ENCODE measurements at regions of chr11 and their contacts with region 1.

Region 1: GRCh38 chr11:119067371-119068222 is at the start of gene VPS11:
- DNase-seq: peak; percentile 99
- ATAC-seq: peak; percentile 99
- H3K4me3 Mint-ChIP-seq: peak within 1 kb of the TSS; percentile 89
- H3K27ac Mint-ChIP-seq: peak within 1 kb of the TSS; percentile 97
- H3K4me1 Mint-ChIP-seq: peaks cover 44% of the 10 kb centered on the region
- H3K27me3 Mint-ChIP-seq: no peaks in the 10 kb centered on the region
- total RNA-seq, gene VPS11: 30.8 to 31.6 TPM

Region 2: DNA sequence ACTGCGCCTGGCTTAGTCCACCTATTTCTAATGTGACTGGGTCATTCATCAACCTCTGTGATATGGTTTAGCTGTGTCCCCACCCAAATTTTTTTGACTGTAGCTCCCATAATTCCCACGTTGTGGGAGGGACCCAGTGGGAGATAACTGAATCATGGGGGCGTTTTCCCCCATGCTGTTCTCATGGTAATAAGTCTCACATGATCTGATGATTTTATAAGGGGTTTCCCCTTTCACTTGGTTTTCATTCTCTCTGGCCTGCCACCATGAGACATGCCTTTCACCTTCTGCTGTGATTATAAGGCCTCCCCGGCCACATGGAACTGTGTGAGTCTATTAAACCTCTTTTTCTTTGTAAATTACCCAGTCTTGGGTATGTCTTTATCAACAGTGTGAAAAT is 60.9 kb before region 1 on chr11:
- CTCF ChIA-PET with region 1: no interaction called
- POLR2A ChIA-PET with region 1: no interaction called
- DNase-seq: no peak
- ATAC-seq: no peak
- H3K4me3 Mint-ChIP-seq: no peak overlapping the region
- H3K27ac Mint-ChIP-seq: no peak overlapping the region
- H3K4me1 Mint-ChIP-seq: peaks cover 3% of the 10 kb centered on the region
- H3K27me3 Mint-ChIP-seq: no peaks in the 10 kb centered on the region

Region 3: DNA sequence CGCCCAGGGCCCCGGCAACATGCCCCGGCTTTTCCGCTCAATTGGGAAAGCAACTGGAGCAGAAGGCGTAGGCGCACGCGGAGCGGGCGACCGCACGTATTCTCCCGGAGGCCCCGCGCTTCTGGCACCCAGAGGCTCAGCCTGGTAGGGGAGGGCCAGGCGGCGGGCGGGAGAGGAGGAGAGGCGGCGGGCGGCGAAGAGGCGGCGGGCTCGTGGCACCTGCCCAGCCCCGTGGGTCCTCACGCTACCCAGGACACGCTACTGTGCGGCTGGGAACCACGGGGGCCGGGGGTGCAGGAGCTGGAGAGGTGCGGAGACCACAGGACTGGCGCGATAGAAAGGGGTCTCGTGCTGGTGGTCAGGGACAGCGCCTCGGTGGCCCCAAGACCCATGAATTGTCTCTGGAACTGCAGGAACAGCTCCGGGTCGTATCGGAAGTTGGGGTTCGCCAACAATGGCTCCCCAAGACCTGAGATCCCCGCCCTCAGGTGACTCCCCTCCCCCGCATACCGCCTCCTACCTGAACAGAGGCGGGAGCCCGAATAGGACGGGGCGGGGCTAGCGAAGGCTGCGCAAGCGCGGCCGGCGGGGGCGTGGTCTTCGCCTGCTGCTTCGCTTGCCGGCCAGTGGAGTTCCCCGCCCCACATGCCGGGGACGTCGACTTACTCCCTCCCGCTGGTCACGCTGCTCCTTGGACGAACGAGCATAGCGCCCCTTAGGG is 37.1 kb before region 1 on chr11 and contains the start of gene SLC37A4:
- CTCF ChIA-PET with region 1: interaction called, 12 read pairs
- POLR2A ChIA-PET with region 1: interaction called, 4 read pairs
- DNase-seq: peak; percentile 99
- ATAC-seq: peak; percentile 95
- H3K4me3 Mint-ChIP-seq: peak within 1 kb of the TSS; percentile 65
- H3K27ac Mint-ChIP-seq: peak within 1 kb of the TSS; percentile 88
- H3K4me1 Mint-ChIP-seq: peaks cover 19% of the 10 kb centered on the region
- H3K27me3 Mint-ChIP-seq: no peaks in the 10 kb centered on the region
- total RNA-seq, gene SLC37A4: 22.4 to 26.6 TPM

Region 4: DNA sequence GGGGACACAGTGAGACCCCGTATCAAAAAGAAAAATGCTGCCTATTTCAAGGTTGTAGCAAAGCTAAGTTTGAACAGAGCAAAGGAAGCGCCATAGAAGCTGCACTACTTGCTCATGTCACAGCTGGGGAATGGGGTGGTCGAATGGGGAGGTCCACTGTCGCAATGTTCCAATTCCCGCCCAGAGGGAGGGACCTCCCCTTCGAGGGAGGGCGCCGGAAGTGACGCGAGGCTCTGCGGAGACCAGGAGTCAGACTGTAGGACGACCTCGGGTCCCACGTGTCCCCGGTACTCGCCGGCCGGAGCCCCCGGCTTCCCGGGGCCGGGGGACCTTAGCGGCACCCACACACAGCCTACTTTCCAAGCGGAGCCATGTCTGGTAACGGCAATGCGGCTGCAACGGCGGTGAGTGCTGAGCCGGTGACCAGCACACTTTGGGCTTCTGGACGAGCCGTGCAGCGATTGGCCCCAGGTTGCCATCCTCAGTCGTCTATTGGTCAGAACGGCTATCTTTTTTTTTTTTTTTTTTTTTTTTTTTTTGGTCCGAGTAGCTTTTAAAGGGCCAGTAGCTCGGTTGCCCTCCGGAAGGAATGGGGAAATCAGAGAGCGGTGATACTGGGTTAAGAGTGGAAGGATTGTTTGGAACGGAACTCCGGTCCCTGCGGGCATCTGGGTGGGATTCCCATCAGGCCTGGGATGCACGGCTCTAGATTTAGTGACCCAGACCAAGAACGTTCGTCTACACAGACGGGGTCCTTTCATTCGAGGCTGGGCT is 17.3 kb after region 1 on chr11 and contains the start of gene HMBS:
- CTCF ChIA-PET with region 1: interaction called, 23 read pairs
- POLR2A ChIA-PET with region 1: interaction called, 31 read pairs
- DNase-seq: peak; percentile 94
- ATAC-seq: peak; percentile 90
- H3K4me3 Mint-ChIP-seq: peak within 1 kb of the TSS; percentile 98
- H3K27ac Mint-ChIP-seq: peak within 1 kb of the TSS; percentile 97
- H3K4me1 Mint-ChIP-seq: peaks cover 34% of the 10 kb centered on the region
- H3K27me3 Mint-ChIP-seq: no peaks in the 10 kb centered on the region
- total RNA-seq, gene HMBS: 31.0 to 32.5 TPM

Region 5: GRCh38 chr11:119101759-119102423 is 34.3 kb after region 1 on chr11 and contains the start of gene DPAGT1:
- CTCF ChIA-PET with region 1: interaction called, 16 read pairs
- POLR2A ChIA-PET with region 1: interaction called, 8 read pairs
- DNase-seq: peak; percentile 92
- ATAC-seq: peak; percentile 85
- H3K4me3 Mint-ChIP-seq: peak within 1 kb of the TSS; percentile 90
- H3K27ac Mint-ChIP-seq: peak within 1 kb of the TSS; percentile 95
- H3K4me1 Mint-ChIP-seq: peaks cover 55% of the 10 kb centered on the region
- H3K27me3 Mint-ChIP-seq: no peaks in the 10 kb centered on the region
- total RNA-seq, gene DPAGT1: 52.5 to 57.7 TPM

Measured in activated CD8-positive, alpha-beta T cell treated with anti-CD3 and anti-CD28 coated beads, Interleukin-2, amount 10 ng/mL, durations not matched to agents 7 days and 5 days (primary cell).